A549 (cell line): ENCODE measurements at regions of chr2 and their contacts with region 1.

Region 1: GRCh38 chr2:25342372-25343186 is 854 bp upstream of the DNMT3A start:
- DNase-seq: peak; percentile 84 to 92
- ATAC-seq: peak; percentile 82 to 96
- H3K4me3 ChIP-seq: peak overlapping the region; percentile 70
- H3K27ac ChIP-seq: peak overlapping the region; percentile 90 to 99
- H3K4me1 ChIP-seq: peaks cover 15% of the 10 kb centered on the region
- CTCF ChIP-seq: peak; percentile 72
- EP300 ChIP-seq: no peak
- POLR2A ChIP-seq: no peak
- RAD21 ChIP-seq: peak; percentile 70 to 79

Region 2: DNA sequence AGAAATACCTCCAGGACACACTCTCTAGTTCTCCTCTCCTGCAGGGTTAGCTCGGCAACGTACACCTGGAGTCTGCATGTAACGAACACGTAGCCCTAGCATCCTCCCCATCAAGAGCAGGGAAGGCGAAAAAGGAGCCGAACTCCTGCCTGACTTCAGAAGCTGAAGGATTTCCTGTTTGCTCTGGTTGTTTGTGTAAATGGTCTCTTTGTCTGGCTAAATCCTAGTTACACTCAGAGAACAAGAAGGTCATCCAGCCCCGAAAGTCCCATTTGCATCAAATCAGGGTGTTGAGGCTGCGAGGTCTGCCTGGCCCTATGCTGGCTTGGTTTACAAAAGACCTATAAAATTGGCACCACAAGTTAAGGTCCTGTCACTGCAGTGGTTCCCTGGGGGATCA is 107.8 kb before region 1 on chr2:
- CTCF ChIA-PET with region 1: no interaction called
- POLR2A ChIA-PET with region 1: no interaction called
- DNase-seq: no peak
- ATAC-seq: no peak
- H3K4me3 ChIP-seq: no peak overlapping the region
- H3K27ac ChIP-seq: no peak overlapping the region
- H3K4me1 ChIP-seq: no peaks in the 10 kb centered on the region
- CTCF ChIP-seq: no peak
- EP300 ChIP-seq: no peak
- POLR2A ChIP-seq: no peak
- RAD21 ChIP-seq: no peak

Region 3: GRCh38 chr2:25331686-25332365 is 10.8 kb before region 1 on chr2:
- CTCF ChIA-PET with region 1: interaction called, 15 read pairs
- POLR2A ChIA-PET with region 1: no interaction called
- DNase-seq: no peak
- ATAC-seq: no peak
- H3K4me3 ChIP-seq: no peak overlapping the region
- H3K27ac ChIP-seq: no peak overlapping the region
- H3K4me1 ChIP-seq: no peaks in the 10 kb centered on the region
- CTCF ChIP-seq: no peak
- EP300 ChIP-seq: no peak
- POLR2A ChIP-seq: no peak
- RAD21 ChIP-seq: no peak